ENCODE measurements at regions of chr3 and their contacts with region 1.

Region 1: DNA sequence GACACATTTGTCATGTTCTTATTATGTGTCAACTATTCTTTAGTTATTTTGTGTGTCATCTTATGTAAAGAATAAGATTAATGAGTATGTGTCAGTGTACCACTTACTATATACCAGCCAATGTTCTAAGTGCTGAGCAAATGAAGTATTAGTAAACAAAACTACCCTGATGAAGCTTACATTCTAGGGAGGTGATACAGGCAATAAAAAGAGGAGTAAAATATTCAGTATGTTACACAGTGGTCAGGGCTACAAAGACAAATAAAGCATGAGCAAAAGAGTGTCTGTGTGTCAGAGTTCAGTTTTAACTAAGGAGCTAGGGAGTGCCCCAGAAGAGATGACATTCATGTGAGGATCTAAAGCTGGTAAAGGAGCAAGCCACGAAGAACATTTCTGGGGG is 79.1 kb downstream of the TRPC1 start:
- DNase-seq: no peak
- H3K4me3 ChIP-seq: no peak overlapping the region
- CTCF ChIP-seq: no peak

Region 2: GRCh38 chr3:142676151-142676550 is 126.7 kb before region 1 on chr3:
- in situ Hi-C with region 1: no loop called
- DNase-seq: no peak
- H3K4me3 ChIP-seq: no peak overlapping the region
- CTCF ChIP-seq: no peak

Region 3: DNA sequence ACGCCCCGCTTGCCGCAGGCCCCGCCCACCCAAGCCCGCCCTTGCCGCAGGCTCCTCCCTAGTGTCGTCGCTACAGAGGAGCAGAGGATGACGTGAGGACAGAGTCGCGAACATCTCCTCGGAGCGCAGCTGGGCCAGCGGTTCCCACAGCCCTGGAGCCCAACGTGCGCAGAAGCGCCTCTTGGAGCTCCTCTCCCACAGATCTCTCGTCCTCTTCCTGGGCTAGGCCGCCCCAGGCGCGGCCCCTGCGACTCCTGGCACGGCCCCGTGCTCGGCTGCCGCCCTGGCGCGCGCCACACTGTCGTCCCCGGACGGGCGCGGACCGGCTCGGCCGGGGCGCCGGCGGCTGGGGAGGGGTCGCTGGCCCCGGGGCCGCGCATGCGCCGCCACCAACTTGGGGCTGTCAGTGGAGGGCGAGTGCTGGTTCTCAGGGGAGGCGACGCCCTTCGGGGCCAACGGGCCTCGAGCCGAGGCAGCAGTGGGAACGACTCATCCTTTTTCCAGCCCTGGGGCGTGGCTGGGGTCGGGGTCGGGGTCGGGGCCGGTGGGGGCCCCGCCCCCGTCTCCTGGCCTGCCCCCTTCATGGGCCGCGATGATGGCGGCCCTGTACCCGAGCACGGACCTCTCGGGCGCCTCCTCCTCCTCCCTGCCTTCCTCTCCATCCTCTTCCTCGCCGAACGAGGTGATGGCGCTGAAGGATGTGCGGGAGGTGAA is 78.8 kb before region 1 on chr3 and contains the start of gene TRPC1:
- in situ Hi-C with region 1: loop called (anchors 5 kb)
- DNase-seq: peak; percentile 28
- H3K4me3 ChIP-seq: peak within 1 kb of the TSS; percentile 74
- CTCF ChIP-seq: no peak

Measured in astrocyte of the cerebellum (primary cell).